ENCODE measurements at regions of chr1 and their contacts with region 1.

Region 1: DNA sequence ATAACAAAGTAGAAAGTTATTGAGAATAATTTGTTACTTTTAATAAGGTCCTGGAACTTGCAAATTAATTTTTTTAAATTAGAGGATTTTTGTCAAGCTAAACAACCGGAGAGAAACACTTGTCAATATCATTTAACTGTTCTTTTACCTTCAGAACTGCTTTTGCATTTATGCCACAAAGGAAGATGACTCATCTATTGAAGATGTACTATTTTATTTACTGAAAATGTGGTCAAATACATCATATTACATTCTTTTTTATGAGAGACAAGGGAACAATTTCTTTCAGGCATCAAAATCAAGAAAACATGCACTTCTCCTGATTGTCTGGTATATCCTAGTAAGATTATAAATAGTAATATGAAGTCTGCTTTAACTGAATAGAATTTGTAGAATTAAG is 558.2 kb upstream of the PRMT6 start:
- DNase-seq: peak; percentile 5
- H3K4me3 ChIP-seq: no peak overlapping the region
- H3K27ac ChIP-seq: no peak overlapping the region
- H3K4me1 ChIP-seq: peaks cover 15% of the 10 kb centered on the region
- H3K27me3 ChIP-seq: no peaks in the 10 kb centered on the region
- CTCF ChIP-seq: no peak

Region 2: DNA sequence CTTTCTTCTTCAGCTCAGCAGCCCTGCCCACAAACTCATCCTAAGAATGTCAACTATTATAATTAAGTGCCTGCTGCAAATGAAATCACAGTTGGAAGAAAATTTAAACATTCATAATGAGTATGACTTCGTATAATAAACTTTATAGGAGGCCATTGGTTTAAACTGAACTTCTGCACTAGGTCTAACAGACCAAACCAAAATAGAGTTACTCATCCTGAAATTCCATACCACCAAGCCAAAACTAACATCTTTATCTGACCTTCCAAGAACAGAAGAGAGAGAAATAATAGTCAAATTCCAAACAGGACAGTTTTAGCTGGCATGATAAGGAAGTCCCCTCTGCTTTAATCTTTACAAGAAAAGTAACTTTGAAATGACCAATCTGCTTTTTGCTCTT is 85.9 kb after region 1 on chr1:
- CTCF ChIA-PET with region 1: no interaction called
- dilution Hi-C with region 1: no loop called
- in situ Hi-C with region 1: loop called in 1 of 2 experiments (anchors 25 kb)
- intact Hi-C with region 1: no loop called
- DNase-seq: no peak
- H3K4me3 ChIP-seq: no peak overlapping the region
- H3K27ac ChIP-seq: no peak overlapping the region
- H3K4me1 ChIP-seq: no peaks in the 10 kb centered on the region
- H3K27me3 ChIP-seq: no peaks in the 10 kb centered on the region
- CTCF ChIP-seq: no peak

Measured in mammary epithelial cell (primary cell).